CD8-positive, alpha-beta T cell (primary cell): ENCODE measurements at regions of chr2 and their contacts with region 1.

Region 1: GRCh38 chr2:101704046-101704466 is 6.5 kb downstream of the MAP4K4 start:
- DNase-seq: peak in 5 of 9 experiments; percentile 23 to 63 (median 43)
- ATAC-seq: peak; percentile 9
- H3K4me3 ChIP-seq: peak overlapping the region in 1 of 2 experiments; percentile 37
- H3K4me3 Mint-ChIP-seq: peak overlapping the region; percentile 83
- H3K27ac ChIP-seq: peak overlapping the region; percentile 34 to 76
- H3K27ac Mint-ChIP-seq: peak overlapping the region; percentile 93
- H3K4me1 ChIP-seq: peaks cover 84% of the 10 kb centered on the region
- H3K4me1 Mint-ChIP-seq: peaks cover 73% of the 10 kb centered on the region
- H3K27me3 ChIP-seq: no peaks in the 10 kb centered on the region
- H3K27me3 Mint-ChIP-seq: no peaks in the 10 kb centered on the region
- CTCF ChIP-seq: no peak

Region 2: GRCh38 chr2:101569886-101570520 is 134.1 kb before region 1 on chr2:
- CTCF ChIA-PET with region 1: no interaction called
- POLR2A ChIA-PET with region 1: interaction called, 3 read pairs
- intact Hi-C with region 1: loop called in 1 of 2 experiments (anchors 5 kb)
- DNase-seq: no peak
- ATAC-seq: no peak
- H3K4me3 ChIP-seq: no peak overlapping the region
- H3K4me3 Mint-ChIP-seq: peak overlapping the region; percentile 69
- H3K27ac ChIP-seq: no peak overlapping the region
- H3K27ac Mint-ChIP-seq: peak overlapping the region; percentile 87
- H3K4me1 ChIP-seq: peaks cover 11% of the 10 kb centered on the region
- H3K4me1 Mint-ChIP-seq: peaks cover 37% of the 10 kb centered on the region
- H3K27me3 ChIP-seq: no peaks in the 10 kb centered on the region
- H3K27me3 Mint-ChIP-seq: no peaks in the 10 kb centered on the region
- CTCF ChIP-seq: no peak

Region 3: GRCh38 chr2:101717071-101717845 is 13.2 kb after region 1 on chr2:
- CTCF ChIA-PET with region 1: interaction called, 25 read pairs
- POLR2A ChIA-PET with region 1: interaction called, 45 read pairs
- intact Hi-C with region 1: loop called (anchors 1 to 2 kb)
- DNase-seq: peak in 7 of 9 experiments; percentile 36 to 77 (median 64)
- ATAC-seq: peak; percentile 64
- H3K4me3 ChIP-seq: peak overlapping the region in 1 of 2 experiments; percentile 8
- H3K4me3 Mint-ChIP-seq: peak overlapping the region; percentile 38
- H3K27ac ChIP-seq: peak overlapping the region; percentile 17 to 71
- H3K27ac Mint-ChIP-seq: peak overlapping the region; percentile 95
- H3K4me1 ChIP-seq: peaks cover 95% of the 10 kb centered on the region
- H3K4me1 Mint-ChIP-seq: peaks cover 82% of the 10 kb centered on the region
- H3K27me3 ChIP-seq: no peaks in the 10 kb centered on the region
- H3K27me3 Mint-ChIP-seq: no peaks in the 10 kb centered on the region
- CTCF ChIP-seq: no peak

Region 4: GRCh38 chr2:101736861-101737291 is 32.8 kb after region 1 on chr2:
- CTCF ChIA-PET with region 1: no interaction called
- POLR2A ChIA-PET with region 1: no interaction called
- intact Hi-C with region 1: loop called in 1 of 2 experiments (anchors 5 kb)
- DNase-seq: no peak
- ATAC-seq: peak; percentile 23
- H3K4me3 ChIP-seq: no peak overlapping the region
- H3K4me3 Mint-ChIP-seq: no peak overlapping the region
- H3K27ac ChIP-seq: no peak overlapping the region
- H3K27ac Mint-ChIP-seq: peak overlapping the region; percentile 6
- H3K4me1 ChIP-seq: peaks cover 69% of the 10 kb centered on the region
- H3K4me1 Mint-ChIP-seq: peaks cover 88% of the 10 kb centered on the region
- H3K27me3 ChIP-seq: no peaks in the 10 kb centered on the region
- H3K27me3 Mint-ChIP-seq: no peaks in the 10 kb centered on the region
- CTCF ChIP-seq: no peak